Head of caudate nucleus (tissue), 42 donors: ENCODE measurements at regions of chr2 and their contacts with region 1.

Region 1: DNA sequence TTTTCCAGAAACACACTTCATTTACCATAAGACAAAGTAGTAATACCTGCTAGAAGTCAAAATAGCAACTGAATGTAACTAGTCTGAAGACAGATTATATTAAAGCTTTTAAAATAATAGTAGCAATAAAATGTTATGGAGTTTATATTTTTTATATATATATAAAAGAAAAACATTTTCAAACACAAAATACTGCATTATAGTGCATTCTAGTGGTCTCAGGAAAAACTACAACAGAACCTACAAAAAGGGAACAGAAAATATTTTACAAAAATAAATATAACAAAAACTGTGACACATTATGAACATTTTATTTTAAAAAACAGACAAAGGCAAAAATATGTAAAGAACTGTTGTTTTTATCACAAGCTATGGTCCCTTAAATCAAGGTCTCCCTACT is 48.0 kb downstream of the STRN start:
- DNase-seq: no peak

Region 2: GRCh38 chr2:36638858-36639257 is 279.4 kb before region 1 on chr2:
- intact Hi-C with region 1: no loop called
- DNase-seq: no peak

Region 3: GRCh38 chr2:36756438-36756837 is 161.9 kb before region 1 on chr2:
- intact Hi-C with region 1: no loop called
- DNase-seq: no peak

Region 4: DNA sequence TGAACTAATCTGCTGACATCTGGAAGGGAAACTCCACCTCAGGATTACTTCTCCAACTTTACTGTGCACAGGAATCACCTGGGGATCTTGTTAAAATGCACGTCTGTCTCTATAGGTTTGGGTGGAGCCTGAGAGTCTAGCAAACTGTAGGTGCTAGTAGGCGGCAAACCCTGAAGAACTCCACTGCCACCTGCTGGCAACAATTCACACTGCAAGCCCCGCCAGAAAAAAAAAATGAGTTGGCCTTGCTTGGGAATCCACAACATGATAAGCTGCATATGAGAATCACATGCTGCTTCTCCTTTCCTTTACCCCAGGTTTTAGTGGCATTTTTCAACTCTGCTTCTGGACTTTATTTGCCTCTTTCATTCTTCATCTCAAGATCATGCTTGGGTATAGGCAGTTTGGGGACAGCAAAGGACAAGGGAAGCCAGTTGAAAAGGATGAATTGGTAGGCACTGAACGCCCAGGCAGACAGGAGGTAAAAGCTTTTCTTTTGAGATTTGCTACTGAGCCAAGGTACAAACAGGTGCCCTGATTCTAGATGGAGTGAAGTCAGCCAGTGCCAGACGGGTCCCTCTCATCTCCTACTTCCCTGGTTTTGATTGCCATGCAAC is 133.0 kb before region 1 on chr2:
- intact Hi-C with region 1: loop called (anchors 5 kb)
- DNase-seq: peak in 33 of 42 donors; percentile 16 to 78 (median 50)

Region 5: GRCh38 chr2:36966370-36967235 is 48.3 kb after region 1 on chr2 and contains the start of gene STRN:
- intact Hi-C with region 1: loop called (anchors 10 kb)
- DNase-seq: peak; percentile 85 to 99 (median 96)